ENCODE measurements at regions of chr3 and their contacts with region 1.

Region 1: GRCh38 chr3:146577662-146578061 is 27.5 kb downstream of the PLSCR5 start:
- DNase-seq: peak; percentile 76
- ATAC-seq: peak; percentile 87
- H3K4me3 ChIP-seq: no peak overlapping the region
- H3K27ac ChIP-seq: no peak overlapping the region
- H3K4me1 ChIP-seq: no peaks in the 10 kb centered on the region
- H3K27me3 ChIP-seq: no peaks in the 10 kb centered on the region
- CTCF ChIP-seq: peak; percentile 79

Region 2: GRCh38 chr3:146065573-146066006 is 512.1 kb before region 1 on chr3:
- CTCF ChIA-PET with region 1: no interaction called
- POLR2A ChIA-PET with region 1: no interaction called
- intact Hi-C with region 1: loop called (anchors 10 kb)
- DNase-seq: peak; percentile 82
- ATAC-seq: no peak
- H3K4me3 ChIP-seq: no peak overlapping the region
- H3K27ac ChIP-seq: peak overlapping the region; percentile 63; the same call in 1 of the 2 replicates
- H3K4me1 ChIP-seq: peaks cover 32% of the 10 kb centered on the region
- H3K27me3 ChIP-seq: no peaks in the 10 kb centered on the region
- CTCF ChIP-seq: peak; percentile 73

Region 3: DNA sequence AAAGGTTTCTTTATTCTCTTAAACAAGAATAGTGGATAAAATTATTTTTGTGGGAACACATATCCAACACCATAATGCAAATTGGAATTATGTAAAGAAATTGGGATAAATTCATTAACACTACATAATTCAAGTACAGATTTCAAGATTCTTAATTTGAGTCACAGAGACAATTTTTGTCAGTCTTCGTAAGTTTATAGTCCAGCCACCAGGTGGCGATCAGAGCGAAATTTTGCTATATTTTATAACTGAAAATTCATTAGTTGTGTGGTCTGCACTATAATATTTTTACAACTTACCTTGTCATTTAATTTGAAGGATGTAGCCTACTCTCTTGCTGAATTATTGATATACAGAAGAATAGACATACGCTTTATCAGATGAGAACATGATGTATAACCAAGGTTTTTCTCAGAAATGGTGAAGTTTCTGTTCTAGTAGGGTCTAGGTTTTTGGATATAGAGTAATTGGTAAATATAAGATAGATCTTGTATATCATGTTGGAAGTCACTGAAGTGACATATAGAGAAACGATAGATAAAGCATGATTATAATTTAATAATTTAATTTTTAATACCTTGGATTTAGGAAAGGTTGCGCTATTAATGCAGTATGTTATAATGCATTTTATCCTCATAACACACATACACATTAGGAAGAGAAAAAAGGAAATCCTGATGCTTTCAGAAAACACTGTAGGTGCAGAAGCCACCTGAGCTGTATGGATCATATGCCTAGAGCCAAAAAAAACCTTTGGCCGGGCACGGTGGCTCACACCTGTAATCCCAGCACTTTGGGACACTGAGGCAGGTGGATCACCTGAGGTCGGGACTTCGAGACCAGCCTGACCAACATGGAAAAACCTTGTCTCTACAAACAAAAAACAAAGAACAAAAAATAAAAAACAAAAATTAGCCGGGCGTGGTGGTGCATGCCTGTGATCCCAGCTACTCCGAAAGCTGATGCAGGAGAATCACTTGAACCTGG is 358.5 kb before region 1 on chr3:
- CTCF ChIA-PET with region 1: no interaction called
- POLR2A ChIA-PET with region 1: no interaction called
- intact Hi-C with region 1: loop called (anchors 1 kb)
- DNase-seq: peak; percentile 70
- ATAC-seq: peak; percentile 15; the same call in 1 of the 2 replicates
- H3K4me3 ChIP-seq: no peak overlapping the region
- H3K27ac ChIP-seq: no peak overlapping the region
- H3K4me1 ChIP-seq: peaks cover 38% of the 10 kb centered on the region
- H3K27me3 ChIP-seq: no peaks in the 10 kb centered on the region
- CTCF ChIP-seq: peak; percentile 90

Region 4: DNA sequence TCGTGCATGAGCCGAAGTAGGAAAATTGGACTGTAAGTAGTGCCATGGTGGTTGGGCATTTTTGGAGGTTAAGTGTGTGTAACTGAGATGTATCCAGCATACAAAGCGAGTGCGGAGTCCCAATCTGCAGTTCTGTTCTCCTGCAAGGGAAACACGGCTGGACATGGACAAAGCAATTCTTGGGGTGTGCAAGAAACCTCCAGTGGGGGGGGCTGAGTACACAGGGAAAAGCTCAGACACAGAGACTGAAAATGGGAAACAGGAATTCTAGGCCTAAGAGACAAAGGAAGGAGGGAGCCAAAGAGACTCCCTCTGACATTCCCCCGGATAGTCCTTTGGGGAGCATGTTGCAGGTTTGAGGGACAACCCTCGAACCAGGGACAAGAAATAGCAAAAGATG is 243.5 kb before region 1 on chr3:
- CTCF ChIA-PET with region 1: no interaction called
- POLR2A ChIA-PET with region 1: no interaction called
- intact Hi-C with region 1: loop called (anchors 1 kb)
- DNase-seq: peak; percentile 60
- ATAC-seq: peak; percentile 70
- H3K4me3 ChIP-seq: no peak overlapping the region
- H3K27ac ChIP-seq: no peak overlapping the region
- H3K4me1 ChIP-seq: no peaks in the 10 kb centered on the region
- H3K27me3 ChIP-seq: no peaks in the 10 kb centered on the region
- CTCF ChIP-seq: peak; percentile 58

Region 5: DNA sequence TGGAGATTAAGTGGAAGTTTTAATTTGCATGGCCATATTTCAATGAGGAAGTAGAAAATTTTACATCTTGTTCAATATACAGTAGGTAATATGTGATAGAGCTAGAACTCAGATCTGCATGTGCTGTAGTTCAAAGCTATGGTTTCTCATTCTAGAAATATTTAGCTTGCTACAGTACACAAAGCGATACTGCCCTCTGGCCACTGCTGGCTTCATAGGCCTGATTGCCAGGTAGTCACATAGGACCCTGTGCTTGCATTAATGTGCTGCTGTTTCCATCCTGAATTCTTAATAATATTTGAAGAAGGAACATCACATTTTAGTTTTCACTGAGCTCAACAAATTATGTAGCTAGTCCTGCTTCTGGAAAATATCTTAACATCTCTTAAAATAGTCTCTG is 195.3 kb before region 1 on chr3:
- CTCF ChIA-PET with region 1: interaction called, 3 read pairs
- POLR2A ChIA-PET with region 1: interaction called, 5 read pairs
- intact Hi-C with region 1: loop called (anchors 5 kb)
- DNase-seq: peak; percentile 61
- ATAC-seq: peak; percentile 93
- H3K4me3 ChIP-seq: no peak overlapping the region
- H3K27ac ChIP-seq: no peak overlapping the region
- H3K4me1 ChIP-seq: no peaks in the 10 kb centered on the region
- H3K27me3 ChIP-seq: no peaks in the 10 kb centered on the region
- CTCF ChIP-seq: peak; percentile 58

Region 6: DNA sequence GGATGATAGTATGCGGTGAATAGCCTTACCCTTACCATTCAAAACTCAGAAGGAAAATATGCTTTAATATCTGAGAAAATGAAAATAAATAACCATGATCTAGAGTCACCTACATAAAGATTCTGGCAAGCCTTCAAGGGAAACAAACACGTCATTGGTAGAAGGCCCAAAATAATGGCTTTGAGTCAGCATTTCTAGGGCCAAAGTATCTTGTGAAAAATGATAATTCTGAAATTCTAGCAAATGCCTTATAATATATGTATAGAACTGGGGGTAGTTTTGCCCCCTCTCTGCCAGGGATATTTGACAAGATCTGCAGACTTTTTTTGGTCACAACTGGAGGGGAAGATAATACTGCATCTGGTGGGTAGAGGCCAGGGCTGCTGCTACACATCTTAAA is 48.6 kb before region 1 on chr3:
- CTCF ChIA-PET with region 1: no interaction called
- POLR2A ChIA-PET with region 1: no interaction called
- intact Hi-C with region 1: loop called (anchors 5 kb)
- DNase-seq: peak; percentile 85
- ATAC-seq: peak; percentile 77
- H3K4me3 ChIP-seq: peak overlapping the region; percentile 58
- H3K27ac ChIP-seq: peak overlapping the region; percentile 68
- H3K4me1 ChIP-seq: peaks cover 29% of the 10 kb centered on the region
- H3K27me3 ChIP-seq: no peaks in the 10 kb centered on the region
- CTCF ChIP-seq: no peak

Region 7: GRCh38 chr3:146550743-146551510 is 26.7 kb before region 1 on chr3:
- CTCF ChIA-PET with region 1: no interaction called
- POLR2A ChIA-PET with region 1: no interaction called
- intact Hi-C with region 1: no loop called
- DNase-seq: peak; percentile 82
- ATAC-seq: peak; percentile 96
- H3K4me3 ChIP-seq: no peak overlapping the region
- H3K27ac ChIP-seq: 0 out of 2 replicates have a peak overlapping the region, but pooled peaks have one; percentile 14
- H3K4me1 ChIP-seq: peaks cover 12% of the 10 kb centered on the region
- H3K27me3 ChIP-seq: no peaks in the 10 kb centered on the region
- CTCF ChIP-seq: no peak

Region 8: GRCh38 chr3:146561879-146562278 is 15.8 kb before region 1 on chr3:
- CTCF ChIA-PET with region 1: no interaction called
- POLR2A ChIA-PET with region 1: no interaction called
- intact Hi-C with region 1: no loop called
- DNase-seq: no peak
- ATAC-seq: no peak
- H3K4me3 ChIP-seq: no peak overlapping the region
- H3K27ac ChIP-seq: no peak overlapping the region
- H3K4me1 ChIP-seq: no peaks in the 10 kb centered on the region
- H3K27me3 ChIP-seq: no peaks in the 10 kb centered on the region
- CTCF ChIP-seq: no peak

Measured in PC-3 (cell line).